ENCODE measurements at regions of chr9 and their contacts with region 1.

Region 1: DNA sequence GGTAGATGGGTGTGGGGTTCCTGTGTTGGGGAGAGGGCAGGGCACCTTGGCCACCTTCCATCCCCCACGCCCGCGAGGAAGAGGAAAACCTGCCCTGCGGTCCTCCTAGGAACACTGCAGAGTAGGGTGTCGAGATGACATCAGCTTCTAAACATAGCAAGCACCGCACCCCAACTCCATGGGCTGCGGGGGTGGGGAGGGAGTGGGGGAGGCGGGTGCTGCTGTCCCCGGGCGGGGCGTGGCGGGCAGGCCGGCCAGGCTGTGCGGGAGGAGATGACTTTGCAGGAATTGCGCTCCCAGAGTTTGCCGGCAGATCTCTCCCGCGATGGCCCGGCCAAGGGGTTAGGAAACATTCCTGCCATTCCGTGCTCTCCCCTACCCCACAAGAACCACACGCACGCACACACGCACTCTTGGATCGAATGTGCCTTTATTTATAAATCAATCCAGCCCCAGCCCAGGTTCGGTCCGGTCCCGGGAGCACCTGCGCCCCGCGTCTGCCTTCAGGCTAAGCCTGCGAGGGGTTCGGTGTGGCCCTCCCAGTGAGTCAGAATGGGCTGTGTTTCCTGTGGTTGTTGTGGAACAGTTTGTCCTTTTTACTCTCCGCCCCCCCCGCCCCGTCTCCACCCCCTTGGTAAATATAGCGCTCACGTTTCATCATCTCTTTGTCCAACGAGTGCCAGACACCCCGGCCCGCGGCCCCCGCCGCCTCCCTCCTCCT is 5.2 kb upstream of the KLF9 start:
- DNase-seq: peak; percentile 96 to 99
- H3K4me3 ChIP-seq: peak overlapping the region; percentile 54 to 61
- H3K27ac ChIP-seq: peak overlapping the region; percentile 100
- H3K4me1 ChIP-seq: peaks cover 0 to 65% (median 43%) of the 10 kb centered on the region in 4 donors
- H3K27me3 ChIP-seq: peaks cover 0 to 2% of the 10 kb centered on the region in 2 donors
- CTCF ChIP-seq: peak in 1 of 2 experiments; percentile 16

Region 2: GRCh38 chr9:70374962-70375618 is 44.6 kb before region 1 on chr9:
- intact Hi-C with region 1: no loop called
- DNase-seq: no peak
- H3K4me3 ChIP-seq: no peak overlapping the region
- H3K27ac ChIP-seq: no peak overlapping the region
- H3K4me1 ChIP-seq: no peaks in the 10 kb centered on the region
- H3K27me3 ChIP-seq: no peaks in the 10 kb centered on the region
- CTCF ChIP-seq: no peak

Region 3: GRCh38 chr9:70465398-70465797 is 45.7 kb after region 1 on chr9:
- intact Hi-C with region 1: no loop called
- DNase-seq: no peak
- H3K4me3 ChIP-seq: no peak overlapping the region
- H3K27ac ChIP-seq: no peak overlapping the region
- H3K4me1 ChIP-seq: peaks cover 0 to 14% (median 0%) of the 10 kb centered on the region in 4 donors
- H3K27me3 ChIP-seq: no peaks in the 10 kb centered on the region
- CTCF ChIP-seq: no peak

Region 4: GRCh38 chr9:70484210-70485130 is 64.8 kb after region 1 on chr9:
- intact Hi-C with region 1: loop called (anchors 2 kb)
- DNase-seq: no peak
- H3K4me3 ChIP-seq: no peak overlapping the region
- H3K27ac ChIP-seq: peak overlapping the region; percentile 81 to 93
- H3K4me1 ChIP-seq: peaks cover 8 to 88% (median 54%) of the 10 kb centered on the region in 4 donors
- H3K27me3 ChIP-seq: no peaks in the 10 kb centered on the region
- CTCF ChIP-seq: peak; percentile 72 to 74

Measured in tibial artery (tissue), 4 donors.